AG04449 (cell line): ENCODE measurements at regions of chr7 and their contacts with region 1.

Region 1: DNA sequence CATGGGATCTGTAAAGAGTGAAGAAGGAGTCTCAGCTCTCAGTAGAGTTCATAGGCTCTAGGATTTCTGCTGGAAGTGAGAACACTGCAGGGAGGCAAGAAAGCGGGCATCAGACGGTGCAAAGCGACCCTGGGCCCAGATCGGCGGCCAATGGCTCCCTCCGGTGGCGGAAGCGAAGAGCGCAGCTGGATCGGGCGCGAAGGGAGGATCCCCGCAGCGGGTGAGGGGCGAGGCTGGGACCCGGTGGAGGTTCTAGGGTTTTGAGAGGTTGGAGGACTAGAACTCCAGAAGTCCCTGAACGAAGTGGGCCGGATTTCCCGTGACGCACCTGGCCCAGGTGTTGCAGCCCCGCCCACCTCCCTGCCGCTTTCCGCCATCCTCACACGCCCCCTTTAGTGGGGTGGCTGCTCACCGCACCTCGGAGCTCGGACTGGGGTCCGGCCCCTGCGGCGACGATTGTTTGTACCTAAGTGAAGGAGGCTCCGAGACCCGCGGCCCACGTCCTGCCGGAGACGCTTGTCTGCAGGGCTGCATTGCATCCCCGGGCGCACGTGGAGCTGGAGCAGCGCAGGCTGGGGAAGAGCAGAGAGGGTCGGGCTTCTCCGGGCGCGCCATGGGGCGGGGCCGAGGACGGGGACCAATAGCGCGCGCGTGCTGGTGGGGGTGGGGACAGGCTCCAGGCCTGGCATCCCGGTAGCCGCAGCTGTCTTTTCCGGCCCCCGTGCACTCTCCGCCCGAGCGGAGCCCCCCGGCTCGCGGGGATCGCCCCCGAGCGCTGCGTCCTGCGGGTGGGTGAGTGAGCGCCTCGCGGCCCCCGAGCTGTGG is at the start of gene SLC12A9:
- DNase-seq: peak; percentile 33
- H3K4me3 ChIP-seq: peak within 1 kb of the TSS; percentile 76
- CTCF ChIP-seq: peak; percentile 97

Region 2: DNA sequence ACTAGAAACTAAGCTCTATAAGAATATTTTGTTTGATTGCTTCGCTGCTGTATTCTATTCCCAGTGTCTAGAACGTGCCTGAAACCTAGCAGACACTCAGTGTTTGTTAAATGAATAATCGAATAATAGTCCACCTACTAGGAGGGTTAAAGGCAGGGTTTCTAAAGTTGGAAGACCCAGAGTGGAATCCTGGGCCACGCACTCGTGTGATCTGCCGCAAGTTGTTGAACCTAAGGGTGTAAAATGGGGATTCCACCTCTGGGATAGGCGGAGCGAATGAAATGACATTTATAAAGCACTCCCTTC is 314.0 kb before region 1 on chr7:
- CTCF ChIA-PET with region 1: no interaction called
- POLR2A ChIA-PET with region 1: no interaction called
- DNase-seq: no peak
- H3K4me3 ChIP-seq: peak overlapping the region; percentile 54
- CTCF ChIP-seq: no peak

Region 3: GRCh38 chr7:100705753-100706671 is 146.2 kb before region 1 on chr7 and contains the start of gene POP7:
- CTCF ChIA-PET with region 1: interaction called, 330 read pairs
- POLR2A ChIA-PET with region 1: interaction called, 22 read pairs
- DNase-seq: peak; percentile 88
- H3K4me3 ChIP-seq: peak within 1 kb of the TSS; percentile 92
- CTCF ChIP-seq: no peak

Region 4: GRCh38 chr7:100726996-100727761 is 125.1 kb before region 1 on chr7:
- CTCF ChIA-PET with region 1: interaction called, 116 read pairs
- POLR2A ChIA-PET with region 1: no interaction called
- DNase-seq: peak; percentile 93
- H3K4me3 ChIP-seq: no peak overlapping the region
- CTCF ChIP-seq: no peak

Region 5: GRCh38 chr7:100803398-100804233 is 48.6 kb before region 1 on chr7:
- CTCF ChIA-PET with region 1: interaction called, 61 read pairs
- POLR2A ChIA-PET with region 1: interaction called, 3 read pairs
- DNase-seq: peak; percentile 49
- H3K4me3 ChIP-seq: no peak overlapping the region
- CTCF ChIP-seq: no peak

Region 6: GRCh38 chr7:100837099-100837836 is 15.0 kb before region 1 on chr7:
- CTCF ChIA-PET with region 1: interaction called, 38 read pairs
- POLR2A ChIA-PET with region 1: interaction called, 3 read pairs
- DNase-seq: peak; percentile 37
- H3K4me3 ChIP-seq: peak overlapping the region; percentile 49
- CTCF ChIP-seq: no peak

Region 7: DNA sequence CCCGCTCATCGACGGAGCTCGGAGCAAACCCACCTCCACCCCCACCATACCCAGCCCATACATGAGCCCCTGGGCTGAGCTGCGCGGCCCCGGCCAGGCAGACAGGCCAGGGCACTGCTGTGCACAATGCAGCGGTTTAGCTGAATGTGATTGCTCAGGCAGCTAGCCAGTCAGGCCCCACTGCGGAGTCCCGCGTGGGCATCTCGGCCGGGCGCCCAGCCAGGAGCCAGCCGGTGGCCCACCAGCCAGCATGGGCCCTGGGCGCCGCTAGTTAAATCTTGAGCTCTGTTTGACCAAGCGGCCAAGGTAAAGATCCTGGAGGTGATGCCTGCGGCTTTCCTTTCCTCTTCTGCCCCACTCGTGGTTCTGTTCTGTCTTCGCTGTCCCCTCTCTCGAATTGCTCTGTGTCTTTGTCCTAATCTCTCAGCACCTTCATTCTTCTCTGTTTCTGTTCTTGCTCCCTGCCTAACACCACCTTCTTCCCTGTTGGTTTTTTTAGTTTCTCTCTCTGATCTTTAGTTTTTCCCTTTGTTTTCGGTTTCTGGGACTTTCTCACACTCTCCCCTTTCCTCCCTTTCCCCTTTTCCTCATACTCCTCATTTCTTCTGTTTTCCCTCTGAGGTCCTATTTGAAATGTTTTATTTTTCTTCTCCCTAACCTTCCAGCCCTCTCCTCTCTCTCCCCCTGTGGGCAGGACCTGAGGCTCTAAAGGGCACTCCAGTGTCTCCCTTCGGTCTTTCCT is 30.7 kb after region 1 on chr7:
- CTCF ChIA-PET with region 1: no interaction called
- POLR2A ChIA-PET with region 1: no interaction called
- DNase-seq: no peak
- H3K4me3 ChIP-seq: no peak overlapping the region
- CTCF ChIP-seq: no peak

Region 8: DNA sequence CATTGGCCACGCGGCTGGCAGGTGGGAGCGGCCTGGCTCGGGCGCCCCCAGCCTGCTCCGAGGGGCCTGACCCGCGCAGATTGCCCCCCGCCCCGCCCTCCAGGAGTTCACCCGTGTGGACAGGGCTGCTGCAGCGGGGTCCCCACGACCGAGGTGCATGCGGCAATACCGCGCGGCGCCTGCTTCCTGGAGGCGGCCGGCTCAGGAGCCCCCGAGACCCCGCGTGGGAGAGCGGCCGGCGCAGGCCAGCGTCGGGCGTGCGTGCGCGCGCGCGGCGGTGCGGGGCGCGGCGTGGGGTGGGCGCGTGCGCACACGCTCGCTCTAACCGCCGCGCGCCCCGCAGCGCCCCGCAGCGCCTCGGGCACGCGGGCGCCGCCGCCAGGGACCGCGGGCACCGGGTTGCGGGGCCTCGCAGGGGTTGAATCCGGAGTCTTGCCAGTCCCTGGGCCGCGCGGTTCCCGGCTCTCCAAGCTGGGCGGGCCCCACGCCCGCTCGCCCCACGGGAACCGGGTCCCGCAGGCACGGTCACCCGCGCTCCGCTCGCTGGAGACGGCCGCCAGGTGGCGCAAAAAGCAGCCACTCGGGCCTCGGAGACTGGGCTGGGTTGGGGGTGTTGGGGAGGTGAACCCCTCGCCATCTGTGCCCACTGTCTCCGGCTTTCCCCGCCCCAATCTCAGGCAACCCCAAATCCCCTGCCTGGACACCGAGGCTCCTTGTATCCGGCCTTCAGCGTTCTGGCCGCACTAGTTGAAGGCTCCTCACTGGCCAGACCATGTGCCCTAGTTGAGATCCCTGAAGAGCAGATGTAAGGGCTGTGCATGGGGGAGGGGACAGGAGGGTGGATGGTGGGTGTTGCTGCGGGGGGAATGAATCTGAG is 44.7 kb after region 1 on chr7:
- CTCF ChIA-PET with region 1: no interaction called
- POLR2A ChIA-PET with region 1: no interaction called
- DNase-seq: no peak
- H3K4me3 ChIP-seq: peak overlapping the region; percentile 34; the same call in 1 of the 2 replicates
- CTCF ChIP-seq: peak; percentile 84

Region 9: GRCh38 chr7:101138213-101138870 is 286.1 kb after region 1 on chr7:
- CTCF ChIA-PET with region 1: no interaction called
- POLR2A ChIA-PET with region 1: no interaction called
- DNase-seq: peak; percentile 87
- H3K4me3 ChIP-seq: no peak overlapping the region
- CTCF ChIP-seq: peak; percentile 70